ENCODE measurements at regions of chr4 and their contacts with region 1.

Region 1: GRCh38 chr4:109302361-109303139 is at the start of gene COL25A1:
- DNase-seq: peak; percentile 77
- H3K4me3 ChIP-seq: peak within 1 kb of the TSS; percentile 60
- H3K27ac ChIP-seq: peak within 1 kb of the TSS; percentile 45
- H3K4me1 ChIP-seq: peaks cover 6% of the 10 kb centered on the region
- H3K27me3 ChIP-seq: peaks cover 23% of the 10 kb centered on the region
- CTCF ChIP-seq: no peak
- total RNA-seq, gene COL25A1: 8.8 and 10.4 TPM in 2 replicates

Region 2: GRCh38 chr4:108881190-108881589 is 421.4 kb before region 1 on chr4:
- CTCF ChIA-PET with region 1: no interaction called
- POLR2A ChIA-PET with region 1: no interaction called
- intact Hi-C with region 1: loop called (anchors 5 kb)
- DNase-seq: peak; percentile 93
- H3K4me3 ChIP-seq: no peak overlapping the region
- H3K27ac ChIP-seq: peak overlapping the region; percentile 73
- H3K4me1 ChIP-seq: peaks cover 83% of the 10 kb centered on the region
- H3K27me3 ChIP-seq: no peaks in the 10 kb centered on the region
- CTCF ChIP-seq: no peak

Measured in A673 (cell line).